ENCODE measurements at regions of chr10 and their contacts with region 1.

Region 1: DNA sequence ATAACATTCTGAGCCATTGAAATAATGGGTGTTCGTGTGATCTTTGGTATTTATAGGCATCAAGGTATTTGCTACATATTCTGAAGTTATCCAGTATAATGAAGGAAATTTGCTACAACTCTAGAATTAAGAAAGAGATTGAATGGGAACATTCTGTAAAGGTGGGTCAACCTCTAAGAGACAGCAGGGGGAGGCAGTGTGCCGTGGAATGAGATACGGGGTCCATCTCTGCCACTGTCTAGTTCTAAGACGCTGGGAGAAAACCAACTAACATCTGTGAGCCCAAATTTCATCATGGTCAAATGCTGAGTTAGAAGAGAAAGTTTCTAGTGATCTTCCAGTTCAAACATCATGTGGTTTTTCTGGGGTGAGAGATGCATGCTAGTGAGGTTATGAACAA is 368.9 kb downstream of the SORCS1 start:
- DNase-seq: peak in 1 of 2 experiments; percentile 25
- H3K4me3 ChIP-seq: no peak overlapping the region
- H3K4me3 Mint-ChIP-seq: no peak overlapping the region
- H3K27ac Mint-ChIP-seq: no peak overlapping the region
- H3K4me1 ChIP-seq: no peaks in the 10 kb centered on the region
- H3K4me1 Mint-ChIP-seq: no peaks in the 10 kb centered on the region
- H3K27me3 ChIP-seq: no peaks in the 10 kb centered on the region
- H3K27me3 Mint-ChIP-seq: peaks cover 3% of the 10 kb centered on the region
- CTCF ChIP-seq: peak; percentile 26 to 38

Region 2: GRCh38 chr10:106780632-106781031 is 15.0 kb before region 1 on chr10:
- CTCF ChIA-PET with region 1: no interaction called
- POLR2A ChIA-PET with region 1: no interaction called
- intact Hi-C with region 1: no loop called
- DNase-seq: no peak
- H3K4me3 ChIP-seq: no peak overlapping the region
- H3K4me3 Mint-ChIP-seq: no peak overlapping the region
- H3K27ac Mint-ChIP-seq: no peak overlapping the region
- H3K4me1 ChIP-seq: no peaks in the 10 kb centered on the region
- H3K4me1 Mint-ChIP-seq: no peaks in the 10 kb centered on the region
- H3K27me3 ChIP-seq: no peaks in the 10 kb centered on the region; the same call in 1 of the 2 replicates
- H3K27me3 Mint-ChIP-seq: peaks cover 2% of the 10 kb centered on the region
- CTCF ChIP-seq: no peak

Region 3: DNA sequence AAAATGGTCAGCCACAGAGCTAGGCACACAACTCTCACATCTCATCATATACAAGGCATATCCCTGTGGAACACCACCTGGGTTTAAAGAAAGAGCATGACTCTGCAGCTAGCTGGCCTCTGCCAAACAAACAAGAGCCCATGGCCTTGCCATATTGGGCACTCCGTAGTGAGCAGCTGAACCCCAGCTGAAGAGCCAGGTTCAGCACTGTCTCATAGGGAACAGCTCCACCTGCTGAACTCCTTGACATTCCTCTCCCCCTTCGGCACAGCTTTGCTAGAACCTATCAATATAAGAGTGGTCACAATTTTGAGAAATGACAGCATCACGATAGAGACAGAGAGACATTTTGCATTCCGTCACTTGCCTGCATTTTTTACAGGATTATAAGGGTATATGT is 348.9 kb after region 1 on chr10:
- CTCF ChIA-PET with region 1: no interaction called
- POLR2A ChIA-PET with region 1: no interaction called
- intact Hi-C with region 1: loop called (anchors 5 kb)
- DNase-seq: peak in 1 of 2 experiments; percentile 6
- H3K4me3 ChIP-seq: no peak overlapping the region
- H3K4me3 Mint-ChIP-seq: no peak overlapping the region
- H3K27ac Mint-ChIP-seq: no peak overlapping the region
- H3K4me1 ChIP-seq: no peaks in the 10 kb centered on the region
- H3K4me1 Mint-ChIP-seq: no peaks in the 10 kb centered on the region
- H3K27me3 ChIP-seq: no peaks in the 10 kb centered on the region
- H3K27me3 Mint-ChIP-seq: no peaks in the 10 kb centered on the region
- CTCF ChIP-seq: no peak